K562 (cell line): ENCODE measurements at regions of chr19 and their contacts with region 1.

Region 1: DNA sequence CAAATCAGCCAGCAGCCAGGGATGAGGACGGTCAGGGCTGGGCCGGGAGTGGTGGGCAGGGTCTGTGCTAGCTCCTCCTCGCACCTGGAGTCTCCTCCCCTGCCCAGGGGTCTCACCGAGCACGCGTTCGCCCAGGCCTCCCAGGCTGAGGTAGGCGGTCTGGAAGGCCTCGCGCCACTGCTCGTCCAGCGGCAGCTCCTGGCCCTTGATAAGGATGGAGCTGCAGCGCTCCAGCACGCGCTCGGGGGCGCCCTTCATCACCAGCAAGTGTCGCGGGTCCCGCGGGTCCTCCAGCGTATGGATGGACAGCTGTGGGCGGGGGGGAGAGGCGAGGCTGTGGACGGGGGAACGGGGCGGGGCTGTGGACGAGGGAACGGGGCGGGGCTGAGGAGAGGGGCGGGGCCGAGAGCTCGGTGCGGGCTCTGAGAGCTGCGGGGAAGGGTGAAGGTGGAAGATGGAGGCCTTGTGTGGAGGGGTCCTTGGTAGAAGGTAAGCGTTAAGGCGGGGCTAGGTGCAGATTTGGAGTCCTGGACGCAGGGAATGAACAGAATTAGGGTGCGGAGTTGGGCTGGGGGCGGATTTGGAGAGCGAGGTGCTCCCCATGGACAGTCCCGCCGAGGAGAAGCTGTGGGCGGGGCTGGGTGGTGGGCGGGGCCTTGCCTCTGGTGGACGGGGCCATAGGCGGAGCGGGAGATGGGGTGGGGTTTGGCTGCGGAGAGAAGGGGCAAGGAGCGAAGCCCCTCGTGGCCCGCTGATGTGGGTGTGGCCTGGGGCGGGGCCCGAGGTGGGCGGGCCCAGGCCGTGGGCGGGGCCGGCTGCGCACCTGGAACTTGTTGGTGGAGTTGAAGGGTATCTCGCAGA is 5.7 kb downstream of the ATP4A start:
- DNase-seq: peak; percentile 91 to 94 (median 93)
- ATAC-seq: peak; percentile 92
- H3K4me3 ChIP-seq: peak overlapping the region; percentile 55
- H3K27ac ChIP-seq: no peak overlapping the region
- H3K4me1 ChIP-seq: peaks cover 4 to 50% of the 10 kb centered on the region in 2 experiments; a peak in 3 of 5 replicates
- H3K27me3 ChIP-seq: peaks cover 28 to 50% of the 10 kb centered on the region in 2 experiments; a peak in 4 of 5 replicates
- CTCF ChIP-seq: peak; percentile 38 to 79 (median 45); a peak in 4 of 6 replicates
- EP300 ChIP-seq: no peak
- POLR2A ChIP-seq: no peak
- RAD21 ChIP-seq: peak in 1 of 2 experiments; percentile 42; a peak in 2 of 4 replicates

Region 2: GRCh38 chr19:35592226-35592625 is 34.5 kb after region 1 on chr19:
- CTCF ChIA-PET with region 1: no interaction called
- POLR2A ChIA-PET with region 1: no interaction called
- in situ Hi-C with region 1: no loop called
- intact Hi-C with region 1: loop called (anchors 5 kb)
- DNase-seq: peak; percentile 43 to 57 (median 45)
- ATAC-seq: 0 out of 3 replicates have a peak, but pooled peaks have one; percentile 29
- H3K4me3 ChIP-seq: no peak overlapping the region
- H3K27ac ChIP-seq: no peak overlapping the region
- H3K4me1 ChIP-seq: no peaks in the 10 kb centered on the region
- H3K27me3 ChIP-seq: no peaks in the 10 kb centered on the region; a peak in 2 of 5 replicates
- CTCF ChIP-seq: peak; percentile 60 to 76 (median 65)
- EP300 ChIP-seq: no peak
- POLR2A ChIP-seq: no peak
- RAD21 ChIP-seq: peak in 1 of 2 experiments; percentile 68; a peak in 2 of 4 replicates

Region 3: DNA sequence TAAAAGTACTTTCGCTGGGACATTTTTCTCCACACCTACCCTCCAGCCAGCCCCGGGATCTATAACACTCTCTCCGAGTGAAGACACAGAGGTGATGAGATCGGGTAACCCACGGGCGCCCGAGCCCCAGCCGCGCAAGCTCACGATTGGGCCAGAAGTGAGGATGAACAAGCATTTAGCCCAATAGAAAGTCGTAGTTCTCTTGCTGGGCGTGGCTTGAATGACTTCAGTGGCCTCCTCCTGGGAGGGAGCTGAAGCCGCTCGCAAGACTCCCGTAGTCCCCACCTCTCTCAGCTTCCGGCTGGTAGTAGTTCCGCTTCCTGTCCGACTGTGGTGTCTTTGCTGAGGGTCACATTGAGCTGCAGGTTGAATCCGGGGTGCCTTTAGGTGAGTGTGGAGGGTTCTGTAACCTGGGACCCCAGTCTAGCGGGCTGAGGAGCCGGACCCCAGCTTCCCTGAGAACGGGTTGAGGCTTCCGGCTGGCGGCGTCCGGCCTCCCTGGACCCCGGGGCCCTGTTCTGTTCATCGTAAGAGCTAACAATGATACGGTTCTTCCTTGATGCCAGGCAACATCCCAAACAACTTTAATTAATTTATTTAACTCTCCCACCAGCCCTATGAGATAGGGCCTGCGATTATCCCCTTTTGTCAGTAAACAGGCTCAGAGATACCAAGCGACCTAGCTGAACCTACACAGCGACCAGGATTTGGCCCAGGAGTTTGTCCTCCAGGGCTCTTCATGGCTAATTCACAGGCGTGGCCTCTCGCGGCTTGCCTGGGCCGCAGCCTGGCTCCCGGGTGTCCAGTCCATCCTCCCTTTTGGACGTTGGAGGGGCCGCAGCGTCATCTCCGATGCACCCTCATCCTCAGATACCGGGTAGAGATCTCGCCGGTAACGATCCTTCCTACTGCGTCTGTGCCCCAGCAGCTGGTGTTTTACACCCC is 90.5 kb after region 1 on chr19 and contains the start of gene COX6B1:
- CTCF ChIA-PET with region 1: no interaction called
- POLR2A ChIA-PET with region 1: no interaction called
- in situ Hi-C with region 1: no loop called
- intact Hi-C with region 1: loop called (anchors 5 kb)
- DNase-seq: peak; percentile 89 to 99 (median 92)
- ATAC-seq: peak; percentile 79
- H3K4me3 ChIP-seq: peak within 1 kb of the TSS; percentile 94
- H3K27ac ChIP-seq: peak within 1 kb of the TSS; percentile 93
- H3K4me1 ChIP-seq: peaks cover 14 to 40% of the 10 kb centered on the region in 2 experiments; a peak in 4 of 5 replicates
- H3K27me3 ChIP-seq: no peaks in the 10 kb centered on the region
- CTCF ChIP-seq: no peak; a peak in 1 of 6 replicates
- EP300 ChIP-seq: peak; percentile 0; the same call in 1 of the 2 replicates
- POLR2A ChIP-seq: peak; percentile 95
- RAD21 ChIP-seq: no peak
- polyA plus RNA-seq, gene COX6B1: 2,325 to 2,393 TPM

Region 4: DNA sequence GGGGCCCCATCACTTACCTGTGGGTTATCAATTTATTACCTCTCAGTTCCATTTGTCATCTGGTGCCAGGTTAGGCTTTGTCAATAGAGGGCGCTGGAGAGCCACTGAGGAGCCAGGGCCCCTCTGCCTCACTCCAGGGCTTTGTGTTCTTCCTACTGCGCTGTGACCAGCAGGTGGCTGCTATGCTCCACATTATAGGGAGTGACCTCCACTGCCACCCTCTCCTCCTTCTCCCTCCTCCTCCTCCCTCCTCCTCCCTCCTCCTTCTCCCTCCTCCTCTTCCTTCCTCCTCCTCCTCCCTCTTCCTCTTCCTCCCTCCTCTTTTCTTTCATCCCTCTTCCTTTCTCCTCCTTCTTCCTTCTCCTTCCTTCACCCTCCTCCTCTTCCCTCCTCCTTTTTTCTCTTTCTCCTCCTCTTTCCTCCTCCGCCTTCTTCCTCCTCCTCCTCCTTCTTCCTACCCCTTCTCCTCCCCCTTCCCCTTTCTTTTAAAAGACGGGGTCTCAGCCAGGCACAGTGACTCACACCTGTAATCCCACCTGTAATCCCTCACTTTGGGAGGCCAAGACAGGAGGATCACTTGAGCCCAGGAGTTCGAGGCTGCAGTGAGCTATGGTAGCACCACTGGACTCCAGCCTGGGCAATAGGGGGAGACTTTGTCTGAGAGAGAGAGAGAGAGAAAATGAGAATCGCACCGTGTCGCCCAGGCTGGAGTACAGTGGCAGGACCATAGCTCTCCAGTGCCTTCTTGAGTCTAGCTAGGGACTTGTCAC is 136.2 kb after region 1 on chr19:
- CTCF ChIA-PET with region 1: interaction called, 3 read pairs
- POLR2A ChIA-PET with region 1: no interaction called
- in situ Hi-C with region 1: no loop called
- intact Hi-C with region 1: loop called (anchors 1 kb)
- DNase-seq: peak; percentile 87 to 92 (median 89)
- ATAC-seq: peak; percentile 100
- H3K4me3 ChIP-seq: no peak overlapping the region
- H3K27ac ChIP-seq: no peak overlapping the region
- H3K4me1 ChIP-seq: no peaks in the 10 kb centered on the region; a peak in 1 of 5 replicates
- H3K27me3 ChIP-seq: no peaks in the 10 kb centered on the region
- CTCF ChIP-seq: peak; percentile 98 to 99 (median 99)
- EP300 ChIP-seq: no peak
- POLR2A ChIP-seq: no peak
- RAD21 ChIP-seq: peak; percentile 97 to 99